ENCODE measurements at regions of chr17 and their contacts with region 1.

Region 1: DNA sequence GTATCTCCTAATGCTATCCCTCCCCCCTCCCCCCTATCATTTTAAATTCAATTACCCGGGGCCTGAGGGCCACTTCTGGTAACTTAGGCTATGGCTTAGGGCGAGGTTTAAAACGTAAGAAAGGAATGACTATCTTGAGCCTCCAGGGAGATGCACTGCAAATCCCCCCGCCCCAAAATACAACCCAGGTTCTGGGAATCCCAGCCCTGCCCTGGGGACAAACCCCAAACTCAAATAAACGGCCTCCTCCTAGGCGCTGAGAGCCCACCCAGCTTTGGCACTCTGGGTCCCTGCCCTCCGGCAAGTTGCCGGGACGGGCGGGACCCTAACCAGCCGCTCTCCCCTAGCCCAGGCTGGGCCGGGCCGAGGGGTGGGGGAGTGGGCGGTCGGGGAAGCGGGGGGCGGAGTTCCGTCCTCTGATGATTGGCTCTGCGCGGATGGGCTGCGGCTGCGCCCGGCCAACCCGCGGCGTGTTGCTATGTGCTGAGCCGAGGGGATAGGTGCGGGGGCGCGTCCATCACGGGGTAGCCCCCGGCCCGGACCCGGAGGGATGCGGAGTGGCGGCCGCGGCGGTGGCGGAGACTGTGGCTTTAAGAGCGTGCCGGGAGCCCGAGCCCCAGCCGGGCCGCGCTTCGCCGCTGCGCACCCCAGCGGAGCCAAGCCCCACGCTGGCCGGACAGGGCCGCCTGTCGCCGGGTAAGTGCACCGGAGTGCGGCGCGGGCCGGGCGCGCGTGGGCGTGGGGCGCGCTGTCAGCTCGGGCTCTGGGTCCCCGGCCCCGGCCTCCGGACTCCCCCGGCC is at the start of gene YPEL2:
- DNase-seq: peak; percentile 90
- H3K4me3 Mint-ChIP-seq: peak within 1 kb of the TSS; percentile 87
- H3K27ac Mint-ChIP-seq: peak within 1 kb of the TSS; percentile 67
- H3K4me1 Mint-ChIP-seq: peaks cover 68% of the 10 kb centered on the region
- H3K27me3 Mint-ChIP-seq: no peaks in the 10 kb centered on the region
- total RNA-seq, gene YPEL2: 4.3 to 4.4 TPM

Region 2: DNA sequence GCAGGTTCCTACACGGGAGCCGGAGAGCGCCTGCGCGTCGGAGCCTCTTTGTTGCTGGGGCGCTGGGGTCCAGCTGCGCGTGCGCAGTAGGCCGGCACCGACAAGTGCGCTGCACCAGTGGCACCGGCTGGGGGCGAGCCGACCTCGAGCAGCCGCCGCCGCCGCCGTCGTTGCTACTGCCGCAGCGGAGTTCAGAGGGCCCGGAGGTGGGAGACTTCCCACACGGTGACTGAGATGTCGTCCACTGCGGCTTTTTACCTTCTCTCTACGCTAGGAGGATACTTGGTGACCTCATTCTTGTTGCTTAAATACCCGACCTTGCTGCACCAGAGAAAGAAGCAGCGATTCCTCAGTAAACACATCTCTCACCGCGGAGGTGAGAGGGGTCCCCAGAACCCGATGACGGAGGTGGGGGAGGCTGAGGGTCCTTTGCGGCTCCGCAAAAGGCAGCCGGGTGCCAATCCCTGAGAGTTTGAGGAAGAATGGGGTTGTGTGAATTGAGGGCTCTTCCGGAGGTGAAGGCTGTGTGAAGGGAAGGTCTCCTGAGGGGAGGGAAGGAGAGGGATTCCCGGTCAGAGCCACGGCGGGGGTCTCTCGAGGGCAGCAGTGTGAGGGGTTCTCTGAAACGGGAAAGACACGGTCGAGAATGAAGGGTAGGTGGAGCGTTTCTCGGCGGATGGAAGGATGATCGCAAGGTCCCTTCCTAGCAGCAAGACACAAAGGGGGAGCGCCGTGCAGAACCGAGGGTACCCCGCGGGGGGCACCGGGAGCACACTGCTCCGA is 110.8 kb before region 1 on chr17 and contains the start of gene GDPD1:
- CTCF ChIA-PET with region 1: interaction called, 5 read pairs
- intact Hi-C with region 1: loop called (anchors 5 kb)
- DNase-seq: peak; percentile 97
- H3K4me3 Mint-ChIP-seq: peak within 1 kb of the TSS; percentile 93
- H3K27ac Mint-ChIP-seq: peak within 1 kb of the TSS; percentile 56
- H3K4me1 Mint-ChIP-seq: peaks cover 13% of the 10 kb centered on the region
- H3K27me3 Mint-ChIP-seq: no peaks in the 10 kb centered on the region
- total RNA-seq, gene GDPD1: 2.2 TPM

Region 3: DNA sequence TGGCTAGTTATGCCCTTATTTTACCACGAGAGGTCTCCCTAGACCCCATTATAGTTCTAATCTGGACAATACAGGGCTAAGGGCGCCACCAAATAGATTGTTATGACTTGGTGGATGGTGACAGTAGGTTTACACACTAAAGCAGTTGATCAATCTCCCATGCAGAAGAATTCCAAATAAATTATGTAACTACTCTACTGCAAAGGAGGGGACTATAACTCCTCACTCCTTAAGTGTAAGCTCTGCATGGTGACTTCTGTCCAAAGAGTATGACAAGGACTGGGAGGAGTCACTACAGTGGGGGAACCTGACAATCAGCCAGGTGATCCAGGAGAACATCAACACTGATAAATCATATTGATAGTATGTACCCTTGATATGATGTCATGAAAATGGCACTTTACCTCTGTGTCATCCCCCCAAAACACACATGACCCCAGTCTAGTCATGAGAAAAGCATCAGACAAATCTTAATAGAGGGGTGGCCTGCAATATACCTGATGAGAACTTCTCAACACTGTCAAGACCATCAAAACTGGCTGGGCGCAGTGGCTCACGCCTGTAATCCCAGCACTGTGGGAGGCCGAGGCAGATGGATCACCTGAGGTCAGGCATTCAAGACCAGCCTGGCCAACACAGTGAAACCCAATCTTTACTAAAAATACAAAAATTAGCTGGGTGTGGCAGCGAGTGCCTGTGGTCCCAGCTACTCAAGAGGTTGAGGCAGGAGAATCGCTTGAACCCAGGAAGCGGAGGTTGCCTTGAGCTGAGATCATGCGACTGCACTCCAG is 20.0 kb before region 1 on chr17:
- CTCF ChIA-PET with region 1: interaction called, 23 read pairs
- intact Hi-C with region 1: loop called (anchors 1 kb)
- DNase-seq: peak; percentile 54
- H3K4me3 Mint-ChIP-seq: no peak overlapping the region
- H3K27ac Mint-ChIP-seq: no peak overlapping the region
- H3K4me1 Mint-ChIP-seq: no peaks in the 10 kb centered on the region
- H3K27me3 Mint-ChIP-seq: no peaks in the 10 kb centered on the region

Region 4: DNA sequence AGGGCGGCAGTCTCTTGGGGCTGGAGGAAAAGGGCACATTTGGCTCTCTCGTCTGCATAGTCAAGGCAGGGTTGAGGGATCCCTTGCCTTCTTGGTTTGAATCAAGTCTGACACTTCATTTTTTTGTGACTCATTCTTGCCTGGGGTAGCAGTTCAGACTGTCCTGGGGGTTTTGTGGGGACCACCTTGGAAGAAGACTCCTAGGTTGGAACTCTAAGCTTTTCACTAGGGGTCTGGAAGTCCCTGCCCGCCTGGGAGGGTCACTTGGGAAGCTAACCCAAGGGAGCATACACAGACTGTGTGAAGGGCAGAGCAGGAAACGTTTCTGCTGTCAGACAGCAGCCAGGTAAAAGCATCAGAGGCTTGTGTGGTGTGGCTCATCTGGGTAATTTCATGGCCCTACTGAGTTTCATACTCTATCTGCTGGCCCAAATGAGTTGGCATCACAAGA is 11.4 kb after region 1 on chr17:
- CTCF ChIA-PET with region 1: interaction called, 8 read pairs
- intact Hi-C with region 1: loop called (anchors 1 kb)
- DNase-seq: peak; percentile 55
- H3K4me3 Mint-ChIP-seq: no peak overlapping the region
- H3K27ac Mint-ChIP-seq: peak overlapping the region; percentile 28
- H3K4me1 Mint-ChIP-seq: peaks cover 40% of the 10 kb centered on the region
- H3K27me3 Mint-ChIP-seq: no peaks in the 10 kb centered on the region

Region 5: DNA sequence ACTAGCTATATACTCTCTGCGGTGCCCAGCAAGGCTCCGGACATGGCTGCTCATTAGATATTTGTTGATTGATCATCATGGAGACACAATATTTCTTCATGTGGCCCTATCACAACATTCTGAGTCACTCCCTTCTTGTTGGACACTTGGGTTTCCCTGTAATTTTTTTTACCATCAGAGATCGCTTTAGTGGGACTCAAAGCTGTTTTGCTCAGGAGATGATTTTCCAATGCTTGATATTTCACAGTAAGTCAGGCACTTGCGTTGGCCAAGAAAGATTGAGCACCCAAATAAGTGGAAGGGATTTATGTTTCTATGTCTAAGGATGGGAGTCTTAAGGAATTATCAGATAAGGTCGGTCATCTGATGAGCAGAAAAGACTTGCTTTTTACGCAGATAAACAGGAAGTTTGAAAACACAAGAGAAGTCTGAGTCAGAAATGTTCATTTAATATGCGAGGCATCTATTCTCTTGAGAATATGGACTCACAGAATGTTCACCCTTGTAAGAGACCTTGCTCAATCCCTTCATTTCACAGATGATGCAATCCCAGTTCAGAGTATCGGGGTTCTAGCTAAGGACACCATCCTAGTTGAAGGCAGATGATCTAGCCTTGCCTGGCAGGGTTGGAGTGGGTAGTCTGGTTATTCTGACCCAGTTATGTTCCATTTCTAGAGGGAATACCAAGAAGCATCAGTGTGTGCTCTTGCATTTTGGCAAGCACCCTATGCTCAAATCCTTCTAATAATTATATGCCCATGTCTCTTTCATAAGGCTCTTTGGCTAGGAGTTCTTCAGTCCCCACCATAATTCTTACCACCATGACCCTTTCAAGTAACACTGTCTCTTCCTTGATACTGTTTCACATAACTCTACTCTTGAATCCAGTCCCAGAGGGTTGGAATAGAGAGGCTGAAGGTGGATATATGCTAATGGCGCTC is 42.5 kb after region 1 on chr17:
- CTCF ChIA-PET with region 1: interaction called, 4 read pairs
- intact Hi-C with region 1: loop called (anchors 2 kb)
- DNase-seq: no peak
- H3K4me3 Mint-ChIP-seq: peak overlapping the region; percentile 28
- H3K27ac Mint-ChIP-seq: peak overlapping the region; percentile 81
- H3K4me1 Mint-ChIP-seq: peaks cover 64% of the 10 kb centered on the region
- H3K27me3 Mint-ChIP-seq: no peaks in the 10 kb centered on the region

Region 6: DNA sequence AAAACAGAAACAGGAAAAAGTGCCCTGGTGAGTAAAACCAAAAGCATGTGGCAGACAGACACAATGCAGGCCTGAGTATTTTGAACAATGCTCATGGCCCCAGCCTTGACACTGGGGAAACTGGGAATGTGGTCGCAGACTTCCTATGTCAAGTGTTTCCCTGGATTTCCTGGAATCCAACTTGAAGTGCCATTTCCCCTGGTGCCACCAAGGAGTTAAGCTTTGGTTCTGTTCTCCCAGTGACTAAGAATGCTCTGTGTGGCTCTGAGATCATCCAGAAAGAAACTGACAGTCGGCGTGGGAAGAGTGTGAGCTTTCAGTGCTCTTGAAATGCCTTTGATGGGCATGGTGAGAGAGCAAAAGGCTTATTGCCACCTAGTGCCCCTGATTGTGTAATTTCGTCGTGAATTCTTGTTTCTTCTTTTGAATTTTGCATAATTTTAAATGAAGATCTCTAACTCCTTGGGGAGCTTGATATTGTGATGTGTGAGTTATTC is 96.1 kb after region 1 on chr17:
- CTCF ChIA-PET with region 1: interaction called, 32 read pairs
- intact Hi-C with region 1: loop called (anchors 1 kb)
- DNase-seq: peak; percentile 83
- H3K4me3 Mint-ChIP-seq: no peak overlapping the region
- H3K27ac Mint-ChIP-seq: no peak overlapping the region
- H3K4me1 Mint-ChIP-seq: peaks cover 15% of the 10 kb centered on the region
- H3K27me3 Mint-ChIP-seq: no peaks in the 10 kb centered on the region

Region 7: DNA sequence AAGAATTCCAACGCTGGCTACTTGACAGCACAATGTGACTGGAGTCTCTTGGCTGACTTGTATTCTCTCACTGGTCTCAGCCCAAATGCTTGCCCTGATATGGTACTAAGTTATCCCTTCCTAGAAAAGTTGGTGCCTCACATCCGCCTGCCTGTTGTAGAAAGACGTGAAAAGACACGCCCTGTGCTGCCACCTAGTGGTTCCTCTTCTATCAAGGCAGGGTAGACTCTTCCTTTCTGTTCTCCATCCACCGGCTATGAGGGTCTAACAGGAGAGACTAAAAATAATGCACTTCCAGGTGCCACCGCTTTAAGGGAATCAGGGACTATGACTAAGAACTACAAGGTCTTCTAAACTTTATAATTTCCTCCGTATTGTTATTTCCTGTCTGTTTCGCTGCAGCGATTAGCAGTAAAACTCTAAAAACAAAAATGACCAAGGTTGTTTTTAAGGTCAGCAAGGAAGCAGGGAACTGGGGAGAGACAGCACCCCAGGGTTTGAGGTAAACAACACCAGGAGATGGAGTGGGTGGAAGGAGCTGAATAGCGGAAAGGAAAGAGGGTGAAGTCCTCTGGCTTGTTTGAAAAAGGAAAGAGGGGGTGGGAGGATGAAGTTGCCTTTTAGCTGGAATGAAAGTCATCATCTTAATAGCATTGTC is 109.6 kb after region 1 on chr17:
- CTCF ChIA-PET with region 1: interaction called, 39 read pairs
- intact Hi-C with region 1: loop called (anchors 1 kb)
- DNase-seq: peak; percentile 96
- H3K4me3 Mint-ChIP-seq: peak overlapping the region; percentile 58
- H3K27ac Mint-ChIP-seq: peak overlapping the region; percentile 88
- H3K4me1 Mint-ChIP-seq: peaks cover 37% of the 10 kb centered on the region
- H3K27me3 Mint-ChIP-seq: no peaks in the 10 kb centered on the region

Region 8: GRCh38 chr17:59456428-59456827 is 125.1 kb after region 1 on chr17:
- CTCF ChIA-PET with region 1: no interaction called
- intact Hi-C with region 1: no loop called
- DNase-seq: no peak
- H3K4me3 Mint-ChIP-seq: no peak overlapping the region
- H3K27ac Mint-ChIP-seq: no peak overlapping the region
- H3K4me1 Mint-ChIP-seq: no peaks in the 10 kb centered on the region
- H3K27me3 Mint-ChIP-seq: no peaks in the 10 kb centered on the region

Measured in activated naive CD4-positive, alpha-beta T cell treated with anti-CD3 and anti-CD28 coated beads for 36 hours (primary cell).